Motor neuron (in vitro differentiated cells): ENCODE measurements at regions of chr14 and their contacts with region 1.

Region 1: DNA sequence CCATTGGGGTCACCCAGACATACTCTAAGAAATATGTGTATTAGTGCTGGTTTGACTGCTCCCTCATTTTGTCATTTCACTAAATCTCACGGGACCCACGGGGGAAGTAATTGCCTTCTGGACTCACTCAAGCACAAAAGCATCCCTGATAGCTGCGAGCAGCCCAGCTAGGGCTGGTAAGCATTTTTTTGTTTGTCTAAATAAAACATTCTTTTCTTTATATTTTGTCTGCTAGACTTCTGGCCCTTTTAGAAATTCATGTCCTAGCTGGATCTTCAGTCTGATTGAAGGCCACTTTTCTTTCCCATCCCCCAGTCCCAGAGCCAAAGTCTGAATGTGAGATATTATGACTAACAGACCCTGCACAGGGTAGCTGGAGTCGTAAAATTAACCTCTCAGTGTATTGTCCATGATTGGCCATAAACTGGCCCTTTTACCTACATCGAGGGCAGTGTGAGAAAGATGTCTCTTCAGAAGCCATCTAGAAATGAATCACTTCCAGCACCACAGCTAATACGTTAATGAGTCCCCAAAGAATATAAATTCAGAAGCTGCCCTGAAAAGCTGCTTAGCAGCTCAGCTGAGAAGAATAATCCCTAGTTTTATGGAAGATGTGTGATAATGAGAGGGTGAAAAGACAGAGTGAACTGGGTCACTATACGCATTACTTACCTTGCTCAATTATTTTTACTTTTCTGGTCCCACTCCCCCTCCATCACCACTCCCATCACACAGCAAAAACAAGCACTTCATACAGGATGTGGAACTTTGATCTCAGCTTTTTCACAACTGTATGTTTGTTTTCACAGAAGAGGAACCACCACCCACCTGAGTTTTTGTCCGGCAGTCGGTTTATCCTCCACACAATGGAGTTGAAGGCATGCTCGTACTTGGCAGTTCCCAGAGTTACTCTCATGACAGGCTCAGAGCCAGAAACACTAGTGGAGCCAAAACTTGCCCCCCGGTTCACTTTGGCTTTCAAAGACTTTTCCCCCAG is 55.6 kb upstream of the GTF2A1 start:
- ATAC-seq: peak in 5 of 8 experiments; percentile 80 to 95 (median 86)
- H3K4me3 ChIP-seq: peak overlapping the region in 2 of 5 donors; percentile 0 to 6
- H3K27ac ChIP-seq: peak overlapping the region; percentile 0 to 60
- H3K4me1 ChIP-seq: peaks cover 23 to 60% of the 10 kb centered on the region in 2 donors

Region 2: GRCh38 chr14:80781577-80782367 is 494.6 kb before region 1 on chr14:
- in situ Hi-C with region 1: no loop called
- ATAC-seq: no peak
- H3K4me3 ChIP-seq: no peak overlapping the region
- H3K27ac ChIP-seq: no peak overlapping the region
- H3K4me1 ChIP-seq: no peaks in the 10 kb centered on the region

Region 3: DNA sequence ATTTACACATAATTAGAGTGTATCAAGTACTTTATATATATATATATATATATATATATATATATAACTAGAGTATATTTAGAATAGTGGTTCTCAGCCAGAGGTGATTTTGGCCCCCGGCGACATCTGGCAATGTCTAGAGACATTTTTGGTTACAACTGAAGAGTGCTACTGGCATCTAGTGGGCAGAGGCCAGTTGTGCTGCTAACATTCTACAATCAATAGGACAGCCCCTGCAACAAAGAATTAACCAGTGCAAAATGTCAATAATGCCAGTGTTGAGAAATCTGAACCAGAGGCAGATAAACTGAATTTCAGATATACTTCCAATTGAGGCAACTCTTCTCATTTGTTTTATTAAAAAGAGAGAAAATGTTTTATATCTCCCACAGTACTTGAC is 64.5 kb before region 1 on chr14:
- in situ Hi-C with region 1: no loop called
- ATAC-seq: peak in 4 of 8 experiments; percentile 52 to 76 (median 62)
- H3K4me3 ChIP-seq: no peak overlapping the region
- H3K27ac ChIP-seq: no peak overlapping the region
- H3K4me1 ChIP-seq: no peaks in the 10 kb centered on the region

Region 4: DNA sequence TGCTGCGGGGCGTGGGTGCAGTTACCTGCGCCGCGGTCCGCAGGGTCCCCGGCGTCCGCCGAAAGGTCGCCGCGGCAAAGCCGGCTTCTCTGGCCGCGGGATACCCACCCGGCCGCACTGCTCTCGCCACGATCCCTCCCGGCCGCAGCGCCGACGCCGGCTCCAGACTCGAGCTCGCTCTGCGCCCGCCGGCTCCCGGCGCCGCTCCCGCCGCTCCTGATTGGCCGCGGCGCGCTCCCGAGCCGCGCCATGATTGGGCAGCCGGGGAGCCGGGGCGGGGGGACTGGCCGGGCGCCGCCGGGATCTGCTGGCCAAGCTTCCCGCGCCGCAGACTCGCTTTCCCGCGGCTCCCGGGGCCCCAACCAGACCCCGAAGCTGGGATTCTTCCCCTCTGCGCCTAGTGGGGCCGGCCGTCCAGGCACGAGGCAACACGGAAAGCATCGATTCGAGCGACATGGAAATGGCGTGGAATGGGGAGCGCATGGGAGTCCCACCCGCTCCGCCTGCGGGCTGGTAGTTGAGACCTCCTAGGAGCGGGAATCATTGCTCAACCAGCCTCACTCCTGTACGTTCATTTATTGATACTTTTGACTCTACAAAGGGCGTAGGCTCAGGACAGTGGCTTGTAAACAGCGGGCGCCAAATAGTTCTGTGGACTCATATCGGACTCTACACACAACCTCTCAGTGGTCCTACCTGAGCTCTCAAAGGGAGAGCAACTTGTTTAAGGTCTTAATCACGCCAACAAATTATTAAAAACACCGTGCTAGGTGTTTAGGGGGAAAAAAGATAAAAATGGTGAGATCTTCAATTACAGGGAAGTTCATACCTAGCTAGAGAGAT is 160.1 kb after region 1 on chr14:
- in situ Hi-C with region 1: loop called in 2 of 9 experiments (anchors 10 to 25 kb)
- ATAC-seq: peak; percentile 87 to 94 (median 89)
- H3K4me3 ChIP-seq: peak overlapping the region; percentile 59 to 84 (median 73)
- H3K27ac ChIP-seq: peak overlapping the region; percentile 73 to 75
- H3K4me1 ChIP-seq: peaks cover 10 to 17% of the 10 kb centered on the region in 2 donors

Region 5: DNA sequence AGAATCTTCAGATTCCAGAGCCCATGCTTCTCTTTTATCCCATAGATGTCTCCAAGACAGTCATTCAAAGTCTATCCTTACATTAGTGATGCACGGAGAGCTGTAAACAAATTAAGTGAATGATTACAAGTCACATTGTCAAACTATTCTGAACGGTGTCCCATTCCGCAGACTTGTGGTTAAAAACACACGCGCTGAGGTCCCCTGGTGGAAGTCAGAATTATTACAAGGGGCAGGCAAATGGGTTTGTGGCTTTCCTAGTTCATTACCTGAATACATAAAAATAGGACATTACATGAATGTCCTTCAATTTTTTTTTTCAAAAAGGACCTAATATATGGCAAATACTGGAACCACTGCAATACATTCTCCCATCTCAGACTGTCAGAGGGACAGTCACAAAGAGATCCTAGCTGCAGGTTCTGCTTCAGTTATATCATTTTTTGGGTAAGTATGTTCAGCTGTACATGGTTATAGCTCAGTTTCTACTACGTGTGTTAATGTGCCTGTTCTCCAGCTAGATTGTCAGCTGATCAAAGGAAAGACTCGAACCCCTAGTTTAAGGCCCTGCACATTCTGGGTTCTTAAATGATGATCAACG is 176.9 kb after region 1 on chr14:
- in situ Hi-C with region 1: loop called (anchors 10 to 25 kb)
- ATAC-seq: peak; percentile 9 to 66 (median 47)
- H3K4me3 ChIP-seq: peak overlapping the region in 1 of 5 donors; percentile 0
- H3K27ac ChIP-seq: no peak overlapping the region
- H3K4me1 ChIP-seq: peaks cover 22 to 23% of the 10 kb centered on the region in 2 donors